ENCODE measurements at regions of chr2 and their contacts with region 1.

Region 1: DNA sequence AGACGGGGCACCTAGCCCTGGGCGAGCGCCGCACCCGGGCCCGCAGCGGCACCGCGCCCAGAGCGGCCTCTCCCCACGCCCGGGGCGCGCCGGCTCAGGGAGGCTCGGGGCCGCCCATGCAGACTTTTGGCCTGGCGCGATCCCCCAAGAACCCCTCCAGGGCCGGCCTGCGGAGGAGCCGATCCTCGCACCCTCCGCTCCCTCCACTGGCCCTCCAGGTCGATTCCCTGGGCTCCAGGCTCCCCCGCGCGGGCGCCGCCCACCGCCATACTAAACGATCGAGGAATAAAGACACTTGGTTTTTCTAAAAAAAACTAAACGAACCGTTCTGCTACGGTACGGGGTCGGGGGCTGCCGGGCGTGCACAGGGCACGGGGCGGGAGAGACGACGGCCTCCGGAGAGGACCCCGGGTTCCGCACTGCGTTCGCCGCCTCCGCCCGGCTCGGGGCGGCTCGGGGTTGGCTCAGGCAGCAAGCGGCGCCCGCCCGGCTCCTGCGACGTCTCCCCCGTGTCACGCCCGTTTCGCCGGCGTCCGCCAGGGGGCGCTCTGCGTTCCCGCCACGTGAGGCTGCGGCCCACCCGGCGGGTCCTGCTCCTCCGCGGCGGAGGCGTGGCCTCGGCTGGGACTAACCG is 365 bp upstream of the KHK start:
- DNase-seq: peak; percentile 95
- H3K4me3 Mint-ChIP-seq: peak overlapping the region; percentile 79
- H3K27ac Mint-ChIP-seq: peak overlapping the region; percentile 90
- H3K4me1 Mint-ChIP-seq: peaks cover 46% of the 10 kb centered on the region
- H3K27me3 Mint-ChIP-seq: no peaks in the 10 kb centered on the region

Region 2: GRCh38 chr2:27042159-27042661 is 44.0 kb before region 1 on chr2:
- CTCF ChIA-PET with region 1: no interaction called
- POLR2A ChIA-PET with region 1: no interaction called
- DNase-seq: no peak
- H3K4me3 Mint-ChIP-seq: no peak overlapping the region
- H3K27ac Mint-ChIP-seq: no peak overlapping the region
- H3K4me1 Mint-ChIP-seq: peaks cover 5% of the 10 kb centered on the region
- H3K27me3 Mint-ChIP-seq: no peaks in the 10 kb centered on the region

Region 3: GRCh38 chr2:27071277-27071989 is 14.8 kb before region 1 on chr2 and contains the start of gene OST4:
- CTCF ChIA-PET with region 1: interaction called, 44 read pairs
- POLR2A ChIA-PET with region 1: interaction called, 9 read pairs
- DNase-seq: peak; percentile 91
- H3K4me3 Mint-ChIP-seq: peak within 1 kb of the TSS; percentile 97
- H3K27ac Mint-ChIP-seq: peak within 1 kb of the TSS; percentile 96
- H3K4me1 Mint-ChIP-seq: peaks cover 62% of the 10 kb centered on the region
- H3K27me3 Mint-ChIP-seq: no peaks in the 10 kb centered on the region
- total RNA-seq, gene OST4: 309 to 386 TPM

Region 4: DNA sequence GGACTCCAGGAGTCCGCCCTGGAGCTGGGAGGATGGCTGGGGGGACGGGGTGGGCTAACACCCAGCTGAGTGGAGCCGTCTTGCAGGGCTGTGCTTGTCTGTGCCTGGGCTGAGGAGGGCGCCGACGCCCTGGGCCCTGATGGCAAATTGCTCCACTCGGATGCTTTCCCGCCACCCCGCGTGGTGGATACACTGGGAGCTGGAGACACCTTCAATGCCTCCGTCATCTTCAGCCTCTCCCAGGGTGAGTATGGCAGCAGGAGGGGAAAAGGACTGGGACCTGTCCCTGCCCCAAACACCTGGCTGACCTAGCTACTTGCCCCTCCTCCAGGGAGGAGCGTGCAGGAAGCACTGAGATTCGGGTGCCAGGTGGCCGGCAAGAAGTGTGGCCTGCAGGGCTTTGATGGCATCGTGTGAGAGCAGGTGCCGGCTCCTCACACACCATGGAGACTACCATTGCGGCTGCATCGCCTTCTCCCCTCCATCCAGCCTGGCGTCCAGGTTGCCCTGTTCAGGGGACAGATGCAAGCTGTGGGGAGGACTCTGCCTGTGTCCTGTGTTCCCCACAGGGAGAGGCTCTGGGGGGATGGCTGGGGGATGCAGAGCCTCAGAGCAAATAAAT is 13.2 kb after region 1 on chr2:
- CTCF ChIA-PET with region 1: interaction called, 21 read pairs
- POLR2A ChIA-PET with region 1: no interaction called
- DNase-seq: no peak
- H3K4me3 Mint-ChIP-seq: no peak overlapping the region
- H3K27ac Mint-ChIP-seq: no peak overlapping the region
- H3K4me1 Mint-ChIP-seq: peaks cover 14% of the 10 kb centered on the region
- H3K27me3 Mint-ChIP-seq: no peaks in the 10 kb centered on the region

Measured in activated CD4-positive, alpha-beta T cell treated with anti-CD3 and anti-CD28 coated beads, Interleukin-2, amount 10 ng/mL, durations not matched to agents 7 days and 5 days (primary cell).